Activated naive CD4-positive, alpha-beta T cell treated with anti-CD3 and anti-CD28 coated beads for 36 hours (primary cell): ENCODE measurements at regions of chr4 and their contacts with region 1.

Region 1: DNA sequence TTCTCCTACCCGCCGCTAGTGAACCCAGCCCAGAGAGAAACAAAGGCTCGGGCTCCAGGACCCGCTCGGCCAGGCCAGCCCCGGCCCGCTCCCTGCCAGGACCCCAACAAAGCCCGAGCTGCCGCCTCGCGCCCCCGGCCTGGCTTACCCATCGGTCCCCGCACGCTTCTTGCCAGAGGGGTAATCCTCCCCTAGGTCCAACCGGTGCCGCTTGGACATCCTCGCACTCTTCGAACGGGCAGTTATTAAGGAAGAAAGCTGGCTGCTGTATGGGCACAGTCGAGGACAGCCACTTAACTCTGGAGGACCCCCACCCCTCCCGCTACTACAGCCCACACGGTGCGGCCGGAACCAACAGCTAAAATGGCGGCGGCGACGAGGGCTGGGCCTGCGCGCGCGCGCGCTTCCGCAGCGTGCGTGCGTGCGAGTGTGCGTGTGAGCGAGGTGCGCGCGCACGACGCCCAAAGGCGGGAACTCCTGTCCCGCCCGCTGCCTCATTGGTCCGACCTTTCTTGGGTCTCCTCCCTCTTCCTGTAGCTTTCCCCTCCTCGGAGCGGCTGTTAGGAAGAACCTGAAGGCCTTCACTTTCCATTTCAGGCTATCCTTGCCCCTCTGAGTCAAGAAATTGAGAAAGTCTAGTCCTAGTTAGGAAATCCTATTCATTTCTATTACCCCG is at the start of gene DHX15:
- DNase-seq: peak; percentile 94
- H3K4me3 Mint-ChIP-seq: peak within 1 kb of the TSS; percentile 95
- H3K27ac Mint-ChIP-seq: peak within 1 kb of the TSS; percentile 96
- H3K4me1 Mint-ChIP-seq: peaks cover 37% of the 10 kb centered on the region
- H3K27me3 Mint-ChIP-seq: no peaks in the 10 kb centered on the region
- total RNA-seq, gene DHX15: 197 to 199 TPM

Region 2: DNA sequence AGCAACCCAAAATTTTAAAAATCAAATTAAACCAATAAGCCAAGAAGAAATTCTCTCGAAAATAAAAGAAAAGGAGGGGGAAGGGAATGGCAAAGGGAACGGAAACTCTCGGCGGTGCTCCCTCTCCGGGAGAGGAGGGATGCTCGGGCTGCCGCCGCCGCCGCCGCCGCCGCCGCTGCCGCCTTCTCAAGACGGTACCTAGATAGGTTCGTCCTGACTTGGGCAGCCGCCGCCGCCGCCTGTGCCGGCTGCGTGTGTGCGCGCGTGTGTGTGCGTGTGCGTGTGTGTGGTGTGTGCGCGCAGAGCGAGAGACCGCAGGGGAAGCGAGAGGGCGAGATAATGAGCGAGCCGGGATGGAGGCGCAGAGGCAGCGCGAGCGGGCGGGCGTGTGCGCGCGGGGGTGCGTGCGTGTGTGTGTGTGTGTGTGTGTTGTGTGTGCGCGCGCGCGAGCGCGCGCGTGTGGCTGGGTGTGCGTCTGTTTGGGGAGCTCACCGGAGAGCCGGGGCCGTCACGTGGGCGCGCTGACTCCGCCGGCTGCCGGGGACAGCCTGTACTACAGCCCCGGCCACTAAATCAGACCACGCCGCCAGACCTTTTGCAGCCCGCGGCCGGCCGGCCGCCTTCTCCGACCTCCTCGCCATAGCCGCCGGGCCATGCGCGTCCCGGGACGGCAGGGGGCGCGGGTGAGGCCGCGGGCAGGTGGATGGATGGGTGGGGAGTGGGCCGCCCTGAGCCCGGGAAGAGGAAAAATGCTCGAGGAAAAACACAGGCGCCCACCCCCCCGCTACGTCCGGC is 111.6 kb before region 1 on chr4:
- CTCF ChIA-PET with region 1: no interaction called
- intact Hi-C with region 1: loop called (anchors 1 kb)
- DNase-seq: peak; percentile 47
- H3K4me3 Mint-ChIP-seq: peak overlapping the region; percentile 83
- H3K27ac Mint-ChIP-seq: no peak overlapping the region
- H3K4me1 Mint-ChIP-seq: peaks cover 29% of the 10 kb centered on the region
- H3K27me3 Mint-ChIP-seq: peaks cover 64% of the 10 kb centered on the region

Region 3: DNA sequence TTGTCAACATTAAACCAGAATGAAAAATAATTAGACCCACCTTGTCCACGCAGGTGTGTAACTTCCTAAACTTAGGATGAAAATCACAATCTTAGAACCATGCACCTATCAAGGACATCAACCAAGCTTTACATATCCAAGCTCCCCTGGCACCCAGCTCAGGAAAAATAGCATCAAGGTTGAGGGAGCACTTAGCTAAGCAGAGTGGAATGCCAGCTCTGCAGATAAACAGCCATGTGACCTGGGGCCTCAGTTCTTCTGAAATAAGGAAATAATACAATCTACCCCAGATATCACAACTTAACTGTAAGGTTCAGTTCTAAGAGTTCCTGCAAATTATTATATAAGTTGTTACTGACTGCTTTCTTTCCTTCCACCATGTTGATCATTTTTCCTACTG is 64.7 kb before region 1 on chr4:
- CTCF ChIA-PET with region 1: interaction called, 3 read pairs
- intact Hi-C with region 1: loop called (anchors 2 kb)
- DNase-seq: no peak
- H3K4me3 Mint-ChIP-seq: no peak overlapping the region
- H3K27ac Mint-ChIP-seq: no peak overlapping the region
- H3K4me1 Mint-ChIP-seq: peaks cover 15% of the 10 kb centered on the region
- H3K27me3 Mint-ChIP-seq: no peaks in the 10 kb centered on the region

Region 4: GRCh38 chr4:24557026-24558025 is 27.0 kb before region 1 on chr4:
- CTCF ChIA-PET with region 1: no interaction called
- intact Hi-C with region 1: loop called (anchors 1 kb)
- DNase-seq: no peak
- H3K4me3 Mint-ChIP-seq: peak overlapping the region; percentile 29
- H3K27ac Mint-ChIP-seq: peak overlapping the region; percentile 83
- H3K4me1 Mint-ChIP-seq: peaks cover 70% of the 10 kb centered on the region
- H3K27me3 Mint-ChIP-seq: no peaks in the 10 kb centered on the region

Region 5: GRCh38 chr4:25234390-25235370 is 650.4 kb after region 1 on chr4:
- CTCF ChIA-PET with region 1: no interaction called
- intact Hi-C with region 1: loop called (anchors 1 kb)
- DNase-seq: peak; percentile 63
- H3K4me3 Mint-ChIP-seq: peak overlapping the region; percentile 92
- H3K27ac Mint-ChIP-seq: peak overlapping the region; percentile 91
- H3K4me1 Mint-ChIP-seq: peaks cover 40% of the 10 kb centered on the region
- H3K27me3 Mint-ChIP-seq: no peaks in the 10 kb centered on the region

Region 6: DNA sequence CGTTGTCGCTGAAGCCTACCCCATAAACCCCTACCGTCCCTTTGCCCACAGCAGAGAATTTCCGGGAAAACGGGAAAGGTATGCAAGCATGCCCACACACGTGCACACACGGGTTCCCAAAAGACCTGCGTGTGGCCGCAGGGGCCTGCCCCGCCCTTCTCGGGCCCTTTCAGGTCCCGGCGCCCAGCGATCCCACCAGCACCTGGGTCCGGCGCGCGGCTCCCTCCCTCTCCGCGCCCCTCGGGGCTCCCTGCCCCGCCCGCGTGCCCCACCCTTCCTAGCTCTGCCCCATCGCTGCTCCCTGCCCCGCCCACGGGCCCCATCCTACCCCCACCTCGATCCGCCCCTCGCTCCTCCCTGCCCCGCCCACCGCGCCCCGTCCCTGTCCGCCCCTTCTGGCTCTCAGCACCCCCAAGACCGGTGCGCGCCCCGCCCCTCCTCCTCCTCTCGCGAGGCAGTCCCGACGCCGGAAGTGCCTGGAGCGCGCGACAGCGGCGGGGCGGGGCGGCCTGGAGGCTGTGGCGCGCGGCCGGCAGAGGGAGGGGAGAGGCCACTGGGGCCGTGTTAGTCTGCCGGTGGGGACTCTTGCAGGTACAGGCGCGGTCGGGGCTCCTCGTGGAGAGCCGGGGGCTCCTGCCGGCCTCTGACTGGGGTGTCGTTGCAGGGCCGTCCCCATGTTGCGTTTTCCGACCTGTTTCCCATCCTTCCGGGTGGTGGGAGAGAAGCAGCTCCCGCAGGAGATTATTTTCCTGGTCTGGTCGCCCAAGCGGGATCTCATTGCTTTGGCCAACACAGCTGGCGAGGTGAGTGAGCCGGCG is 792.6 kb after region 1 on chr4 and contains the start of gene ANAPC4:
- CTCF ChIA-PET with region 1: no interaction called
- intact Hi-C with region 1: loop called (anchors 1 kb)
- DNase-seq: peak; percentile 95
- H3K4me3 Mint-ChIP-seq: no peak within 1 kb of the TSS
- H3K27ac Mint-ChIP-seq: peak within 1 kb of the TSS; percentile 78
- H3K4me1 Mint-ChIP-seq: peaks cover 9% of the 10 kb centered on the region
- H3K27me3 Mint-ChIP-seq: no peaks in the 10 kb centered on the region
- total RNA-seq, gene ANAPC4: 23.1 to 27.3 TPM